ENCODE measurements at regions of chr17 and their contacts with region 1.

Region 1: DNA sequence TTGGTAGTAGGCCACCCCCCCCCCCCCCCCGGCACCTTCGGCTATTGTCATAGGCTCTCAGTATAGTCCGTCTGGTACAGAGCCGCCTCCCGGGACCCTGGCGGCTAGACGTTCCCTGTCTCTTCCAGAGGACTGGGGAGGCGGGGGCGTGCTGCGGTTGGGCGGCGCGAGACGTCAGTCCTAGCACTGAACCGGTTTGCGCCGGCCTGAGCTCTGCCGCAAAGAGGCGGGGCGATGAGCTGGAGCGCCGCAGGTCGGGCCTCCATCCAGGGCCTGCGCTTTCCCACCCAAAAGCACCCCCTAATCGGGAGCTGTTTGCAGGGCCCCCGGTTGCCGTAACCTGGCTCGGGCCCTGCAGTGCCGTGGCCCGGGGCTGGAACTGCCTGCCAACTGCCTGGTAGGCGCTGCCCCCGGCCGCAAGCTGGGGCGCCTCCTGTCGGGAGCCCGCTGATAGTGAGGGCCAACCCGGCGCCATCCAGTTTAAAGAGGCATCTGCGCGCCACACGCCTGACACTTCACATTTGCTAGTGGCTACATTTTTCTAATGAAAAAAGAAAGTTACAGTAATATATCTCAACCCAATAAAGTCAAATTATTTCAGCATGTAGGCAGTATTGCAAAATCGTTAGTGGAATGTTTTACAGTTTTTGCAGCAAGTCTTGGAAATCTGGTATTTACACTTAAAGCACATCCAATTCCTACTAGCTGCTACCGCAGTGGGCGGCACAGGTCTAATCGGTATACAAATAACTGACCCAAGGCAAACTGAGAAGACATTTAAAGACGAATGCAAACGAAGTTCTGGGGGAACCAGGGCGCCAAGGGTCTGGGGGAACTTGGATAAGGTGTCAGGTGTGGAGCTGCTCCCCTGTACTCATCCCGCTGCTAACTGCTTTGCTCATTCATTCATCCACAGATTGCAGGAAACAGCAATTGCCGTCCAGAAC is 748 bp upstream of the USP22 start:
- DNase-seq: peak; percentile 90 to 99 (median 95)
- ATAC-seq: peak; percentile 77
- H3K4me3 ChIP-seq: peak overlapping the region; percentile 55 to 66
- H3K4me3 Mint-ChIP-seq: peak overlapping the region; percentile 78
- H3K27ac ChIP-seq: peak overlapping the region; percentile 94 to 98
- H3K27ac Mint-ChIP-seq: peak overlapping the region; percentile 92
- H3K4me1 ChIP-seq: peaks cover 25% of the 10 kb centered on the region
- H3K4me1 Mint-ChIP-seq: peaks cover 31% of the 10 kb centered on the region
- H3K27me3 ChIP-seq: no peaks in the 10 kb centered on the region
- H3K27me3 Mint-ChIP-seq: no peaks in the 10 kb centered on the region
- CTCF ChIP-seq: peak; percentile 96

Region 2: GRCh38 chr17:19977311-19978208 is 1066.0 kb before region 1 on chr17 and contains the start of gene AKAP10:
- CTCF ChIA-PET with region 1: no interaction called
- POLR2A ChIA-PET with region 1: interaction called, 6 read pairs
- intact Hi-C with region 1: loop called in 1 of 2 experiments (anchors 5 kb)
- DNase-seq: peak; percentile 87 to 95 (median 93)
- ATAC-seq: peak; percentile 84
- H3K4me3 ChIP-seq: peak within 1 kb of the TSS; percentile 67 to 89
- H3K4me3 Mint-ChIP-seq: peak within 1 kb of the TSS; percentile 94
- H3K27ac ChIP-seq: peak within 1 kb of the TSS; percentile 76 to 95
- H3K27ac Mint-ChIP-seq: peak within 1 kb of the TSS; percentile 95
- H3K4me1 ChIP-seq: peaks cover 29% of the 10 kb centered on the region
- H3K4me1 Mint-ChIP-seq: peaks cover 53% of the 10 kb centered on the region
- H3K27me3 ChIP-seq: no peaks in the 10 kb centered on the region
- H3K27me3 Mint-ChIP-seq: no peaks in the 10 kb centered on the region
- CTCF ChIP-seq: no peak
- total RNA-seq, gene AKAP10: 21.5 to 29.6 TPM

Region 3: DNA sequence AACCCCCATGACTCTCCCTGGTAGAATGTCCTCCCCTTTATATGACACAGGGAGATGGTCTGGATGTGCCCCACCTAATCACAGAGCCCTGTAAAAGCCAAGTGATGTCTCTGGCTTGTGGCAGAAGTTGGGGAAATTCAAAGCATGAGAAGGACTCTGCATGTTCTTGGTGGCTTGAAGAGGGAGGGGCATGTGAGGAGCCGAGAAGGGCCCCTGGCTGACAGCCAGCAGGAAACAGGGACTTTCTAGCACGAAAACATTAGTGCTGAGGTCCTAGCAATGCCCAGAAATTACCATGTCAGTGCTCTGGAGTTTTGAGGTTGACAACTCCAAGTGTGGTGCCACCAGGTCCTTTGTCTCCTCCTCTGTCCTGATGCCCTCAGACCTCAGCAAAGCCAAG is 76.7 kb before region 1 on chr17:
- CTCF ChIA-PET with region 1: no interaction called
- POLR2A ChIA-PET with region 1: no interaction called
- intact Hi-C with region 1: no loop called
- DNase-seq: peak in 2 of 9 experiments; percentile 35 to 67
- ATAC-seq: no peak
- H3K4me3 ChIP-seq: no peak overlapping the region
- H3K4me3 Mint-ChIP-seq: no peak overlapping the region
- H3K27ac ChIP-seq: no peak overlapping the region
- H3K27ac Mint-ChIP-seq: no peak overlapping the region
- H3K4me1 ChIP-seq: peaks cover 8% of the 10 kb centered on the region
- H3K4me1 Mint-ChIP-seq: peaks cover 10% of the 10 kb centered on the region
- H3K27me3 ChIP-seq: peaks cover 0 to 6% of the 10 kb centered on the region in 2 experiments
- H3K27me3 Mint-ChIP-seq: peaks cover 11% of the 10 kb centered on the region
- CTCF ChIP-seq: no peak

Region 4: GRCh38 chr17:21019976-21020586 is 23.5 kb before region 1 on chr17:
- CTCF ChIA-PET with region 1: interaction called, 9 read pairs
- POLR2A ChIA-PET with region 1: interaction called, 5 read pairs
- intact Hi-C with region 1: loop called (anchors 1 kb)
- DNase-seq: peak in 6 of 9 experiments; percentile 26 to 68 (median 61)
- ATAC-seq: peak; percentile 81
- H3K4me3 ChIP-seq: no peak overlapping the region
- H3K4me3 Mint-ChIP-seq: no peak overlapping the region
- H3K27ac ChIP-seq: no peak overlapping the region
- H3K27ac Mint-ChIP-seq: peak overlapping the region; percentile 18
- H3K4me1 ChIP-seq: peaks cover 21% of the 10 kb centered on the region
- H3K4me1 Mint-ChIP-seq: peaks cover 45% of the 10 kb centered on the region
- H3K27me3 ChIP-seq: no peaks in the 10 kb centered on the region
- H3K27me3 Mint-ChIP-seq: no peaks in the 10 kb centered on the region
- CTCF ChIP-seq: no peak

Region 5: GRCh38 chr17:21126645-21127510 is 83.3 kb after region 1 on chr17 and contains the start of gene DHRS7B:
- CTCF ChIA-PET with region 1: no interaction called
- POLR2A ChIA-PET with region 1: interaction called, 4 read pairs
- intact Hi-C with region 1: loop called (anchors 1 kb)
- DNase-seq: peak; percentile 90 to 98 (median 97)
- ATAC-seq: peak; percentile 80
- H3K4me3 ChIP-seq: peak within 1 kb of the TSS; percentile 88 to 90
- H3K4me3 Mint-ChIP-seq: peak within 1 kb of the TSS; percentile 94
- H3K27ac ChIP-seq: peak within 1 kb of the TSS; percentile 87 to 94
- H3K27ac Mint-ChIP-seq: peak within 1 kb of the TSS; percentile 97
- H3K4me1 ChIP-seq: peaks cover 22% of the 10 kb centered on the region
- H3K4me1 Mint-ChIP-seq: peaks cover 38% of the 10 kb centered on the region
- H3K27me3 ChIP-seq: no peaks in the 10 kb centered on the region
- H3K27me3 Mint-ChIP-seq: no peaks in the 10 kb centered on the region
- CTCF ChIP-seq: no peak
- total RNA-seq, gene DHRS7B: 6.5 to 8.2 TPM

Region 6: GRCh38 chr17:21275579-21276263 is 232.2 kb after region 1 on chr17:
- CTCF ChIA-PET with region 1: interaction called, 7 read pairs
- POLR2A ChIA-PET with region 1: interaction called, 10 read pairs
- intact Hi-C with region 1: no loop called
- DNase-seq: peak; percentile 83 to 98 (median 94)
- ATAC-seq: peak; percentile 84
- H3K4me3 ChIP-seq: peak overlapping the region; percentile 60 to 80
- H3K4me3 Mint-ChIP-seq: peak overlapping the region; percentile 87
- H3K27ac ChIP-seq: peak overlapping the region; percentile 57 to 75
- H3K27ac Mint-ChIP-seq: peak overlapping the region; percentile 90
- H3K4me1 ChIP-seq: peaks cover 37% of the 10 kb centered on the region
- H3K4me1 Mint-ChIP-seq: peaks cover 42% of the 10 kb centered on the region
- H3K27me3 ChIP-seq: no peaks in the 10 kb centered on the region
- H3K27me3 Mint-ChIP-seq: no peaks in the 10 kb centered on the region
- CTCF ChIP-seq: no peak

Region 7: DNA sequence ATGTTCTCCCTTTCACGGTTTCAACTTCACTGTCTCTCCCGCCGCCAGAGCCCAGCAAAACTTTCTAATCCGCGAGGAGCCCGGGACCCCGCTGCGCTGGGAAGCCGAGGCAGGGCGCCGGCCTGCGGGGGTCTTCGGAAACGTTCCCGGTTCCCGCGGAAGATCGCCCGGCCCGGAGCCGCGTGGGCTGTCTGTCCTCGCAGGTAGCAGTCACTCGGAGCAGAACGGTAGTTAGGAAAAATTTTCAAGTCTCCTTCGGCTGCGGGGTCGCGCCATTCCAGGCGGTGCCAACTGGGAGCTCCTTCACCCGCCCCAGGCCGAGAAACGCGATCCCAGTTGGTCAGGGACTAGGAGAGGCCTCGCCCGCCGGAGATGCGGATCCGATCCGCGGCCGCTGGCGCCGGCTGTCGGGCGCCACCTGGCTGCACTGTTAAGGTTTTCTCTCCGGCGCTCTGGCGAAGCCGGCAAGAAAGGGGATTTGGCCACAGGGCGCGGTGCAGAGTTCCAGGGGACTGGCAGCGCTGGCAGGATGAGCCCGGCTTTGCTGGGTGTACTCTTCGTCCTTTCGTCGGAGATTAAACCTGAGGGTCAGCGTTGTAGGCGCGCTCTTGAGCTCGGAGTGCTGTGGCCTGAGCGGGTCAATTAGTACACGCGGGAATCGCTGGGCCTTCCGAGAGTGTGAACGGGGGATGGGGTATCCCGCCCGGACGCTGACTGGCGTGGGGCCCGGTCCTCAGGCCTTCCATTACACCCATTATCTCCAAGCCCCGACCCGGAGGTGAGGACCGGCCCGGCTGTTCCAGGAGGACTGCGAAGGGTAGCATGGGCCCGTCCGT is 468.0 kb after region 1 on chr17:
- CTCF ChIA-PET with region 1: interaction called, 3 read pairs
- POLR2A ChIA-PET with region 1: no interaction called
- intact Hi-C with region 1: loop called in 1 of 2 experiments (anchors 5 kb)
- DNase-seq: peak; percentile 26 to 80 (median 66)
- ATAC-seq: peak; percentile 72
- H3K4me3 ChIP-seq: peak overlapping the region; percentile 38 to 52
- H3K4me3 Mint-ChIP-seq: peak overlapping the region; percentile 69
- H3K27ac ChIP-seq: no peak overlapping the region
- H3K27ac Mint-ChIP-seq: no peak overlapping the region
- H3K4me1 ChIP-seq: peaks cover 8% of the 10 kb centered on the region
- H3K4me1 Mint-ChIP-seq: peaks cover 10% of the 10 kb centered on the region
- H3K27me3 ChIP-seq: peaks cover 5 to 9% of the 10 kb centered on the region in 2 experiments
- H3K27me3 Mint-ChIP-seq: peaks cover 25% of the 10 kb centered on the region
- CTCF ChIP-seq: peak; percentile 88